ENCODE measurements at regions of chr9 and their contacts with region 1.

Region 1: DNA sequence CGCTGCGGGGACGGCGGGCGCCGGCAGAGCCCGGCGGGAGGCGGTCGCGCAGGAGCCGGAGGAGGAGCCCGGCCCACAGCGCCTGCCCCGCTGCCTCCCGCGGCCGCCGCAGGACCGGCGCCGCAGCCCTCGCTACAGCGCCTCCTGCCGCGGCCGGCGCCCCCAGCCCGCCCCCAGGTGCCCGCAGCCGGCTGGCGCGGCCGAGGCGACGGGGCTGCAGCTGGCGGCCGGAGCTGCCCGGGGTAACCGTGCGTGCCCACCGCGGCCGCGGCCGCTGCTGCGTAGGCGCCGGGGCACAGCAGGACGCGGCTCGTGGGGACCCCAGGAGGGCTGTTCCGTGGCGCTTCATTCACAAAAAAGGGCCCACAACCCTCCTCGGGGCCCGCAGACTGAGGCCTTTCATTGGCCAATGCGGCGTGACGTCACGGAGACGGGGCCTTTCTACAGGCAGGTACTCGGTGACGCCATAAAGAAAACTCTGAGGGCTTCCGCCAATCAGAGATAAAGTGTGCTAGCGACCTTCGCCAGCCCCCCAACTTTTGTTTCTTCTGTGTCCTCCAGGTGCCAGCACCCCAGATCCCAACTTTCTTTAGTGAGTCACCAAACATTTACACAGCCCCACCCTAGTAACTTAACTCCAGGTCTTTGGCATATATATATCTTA is at the start of gene CDC14B:
- DNase-seq: peak; percentile 57 to 74
- ATAC-seq: peak; percentile 58 to 70
- H3K4me3 ChIP-seq: peak within 1 kb of the TSS; percentile 60 to 71 (median 66)
- H3K27ac ChIP-seq: peak within 1 kb of the TSS; percentile 78 to 98 (median 89)
- H3K4me1 ChIP-seq: peaks cover 0 to 8% of the 10 kb centered on the region in 2 donors
- H3K27me3 ChIP-seq: no peaks in the 10 kb centered on the region
- CTCF ChIP-seq: peak in 2 of 5 experiments; percentile 9 to 14
- POLR2A ChIP-seq: peak in 1 of 2 donors; percentile 27
- total RNA-seq, gene CDC14B: 2.0 to 9.4 (median 5.5) TPM

Region 2: DNA sequence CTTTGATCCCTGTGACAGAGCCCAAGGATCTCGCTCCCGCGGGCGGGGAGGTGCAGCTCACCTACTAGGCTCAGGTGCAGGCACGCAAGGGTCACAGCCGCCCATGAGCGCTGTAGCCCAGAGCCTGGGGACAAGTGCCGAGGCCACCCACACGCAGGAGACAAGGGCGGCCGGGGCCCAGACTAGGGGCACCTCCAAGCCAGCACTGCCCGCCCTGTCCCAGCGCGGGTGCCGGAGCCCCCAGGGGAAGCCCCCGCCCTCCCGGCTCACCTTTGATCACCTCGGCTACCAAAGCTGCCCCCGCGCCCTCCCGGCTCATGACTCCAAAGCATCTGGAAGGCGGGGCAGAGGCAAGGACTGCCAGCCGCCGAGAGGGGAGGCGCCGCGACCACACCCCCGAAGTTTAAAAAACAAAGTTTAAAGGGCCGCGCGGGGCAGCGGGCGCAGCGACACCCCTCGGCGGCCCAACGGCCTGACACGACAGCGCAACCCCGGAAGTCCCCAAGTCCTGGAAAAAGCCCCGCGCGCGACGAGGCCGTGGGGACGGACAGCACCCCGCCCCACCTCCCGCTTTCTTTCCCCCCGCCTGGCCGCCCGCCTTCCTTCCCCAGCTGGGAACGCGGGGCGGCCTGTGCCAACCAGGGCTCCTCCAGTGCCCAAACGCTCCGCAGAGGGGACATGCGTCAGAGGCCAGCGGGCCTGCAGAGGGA is 53.0 kb before region 1 on chr9:
- in situ Hi-C with region 1: no loop called
- intact Hi-C with region 1: loop called (anchors 2 kb)
- DNase-seq: peak; percentile 45 to 60
- ATAC-seq: peak; percentile 82 to 91
- H3K4me3 ChIP-seq: peak overlapping the region; percentile 65 to 81 (median 77)
- H3K27ac ChIP-seq: peak overlapping the region; percentile 69 to 84 (median 75)
- H3K4me1 ChIP-seq: peaks cover 0 to 11% of the 10 kb centered on the region in 2 donors
- H3K27me3 ChIP-seq: no peaks in the 10 kb centered on the region
- CTCF ChIP-seq: peak; percentile 31 to 77 (median 62)
- POLR2A ChIP-seq: peak in 1 of 2 donors; percentile 12